Lower lobe of right lung (tissue), 2 donors: ENCODE measurements at regions of chr11 and their contacts with region 1.

Region 1: DNA sequence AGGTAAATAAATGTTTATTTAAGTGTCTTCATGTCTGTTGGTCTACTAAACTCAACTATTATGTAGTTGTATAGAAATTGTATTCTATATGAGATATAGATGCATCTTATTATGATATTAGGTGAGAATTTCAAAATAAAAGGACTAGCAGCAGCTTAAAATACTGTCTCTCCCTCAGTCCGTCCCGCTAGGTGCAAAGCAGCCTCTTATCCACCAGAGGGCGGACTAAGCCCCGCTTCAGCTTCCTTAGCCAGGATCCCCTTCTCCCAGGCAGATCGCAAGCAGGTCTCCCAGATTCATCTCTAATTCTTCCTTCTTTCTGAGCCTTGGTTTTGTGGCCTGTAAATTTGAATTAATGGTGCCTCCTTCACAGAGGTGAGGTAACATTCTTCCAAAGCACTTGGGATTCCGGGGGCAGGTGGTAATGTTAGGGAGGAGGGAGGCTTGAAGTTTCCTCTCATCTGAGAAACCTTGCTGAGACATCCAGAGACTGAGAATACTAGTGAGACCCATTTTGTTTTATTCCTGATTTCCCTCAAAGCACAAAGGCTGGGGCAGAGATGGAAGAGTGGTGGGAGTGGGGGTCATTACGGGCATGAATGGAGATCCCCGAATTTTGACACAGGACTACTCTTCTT is 13.5 kb upstream of the INSC start:
- DNase-seq: peak; percentile 63
- ATAC-seq: peak; percentile 82 to 83
- H3K4me3 ChIP-seq: no peak overlapping the region
- H3K27ac ChIP-seq: no peak overlapping the region
- H3K4me1 ChIP-seq: no peaks in the 10 kb centered on the region
- H3K27me3 ChIP-seq: peaks cover 4% of the 10 kb centered on the region
- CTCF ChIP-seq: peak; percentile 90

Region 2: DNA sequence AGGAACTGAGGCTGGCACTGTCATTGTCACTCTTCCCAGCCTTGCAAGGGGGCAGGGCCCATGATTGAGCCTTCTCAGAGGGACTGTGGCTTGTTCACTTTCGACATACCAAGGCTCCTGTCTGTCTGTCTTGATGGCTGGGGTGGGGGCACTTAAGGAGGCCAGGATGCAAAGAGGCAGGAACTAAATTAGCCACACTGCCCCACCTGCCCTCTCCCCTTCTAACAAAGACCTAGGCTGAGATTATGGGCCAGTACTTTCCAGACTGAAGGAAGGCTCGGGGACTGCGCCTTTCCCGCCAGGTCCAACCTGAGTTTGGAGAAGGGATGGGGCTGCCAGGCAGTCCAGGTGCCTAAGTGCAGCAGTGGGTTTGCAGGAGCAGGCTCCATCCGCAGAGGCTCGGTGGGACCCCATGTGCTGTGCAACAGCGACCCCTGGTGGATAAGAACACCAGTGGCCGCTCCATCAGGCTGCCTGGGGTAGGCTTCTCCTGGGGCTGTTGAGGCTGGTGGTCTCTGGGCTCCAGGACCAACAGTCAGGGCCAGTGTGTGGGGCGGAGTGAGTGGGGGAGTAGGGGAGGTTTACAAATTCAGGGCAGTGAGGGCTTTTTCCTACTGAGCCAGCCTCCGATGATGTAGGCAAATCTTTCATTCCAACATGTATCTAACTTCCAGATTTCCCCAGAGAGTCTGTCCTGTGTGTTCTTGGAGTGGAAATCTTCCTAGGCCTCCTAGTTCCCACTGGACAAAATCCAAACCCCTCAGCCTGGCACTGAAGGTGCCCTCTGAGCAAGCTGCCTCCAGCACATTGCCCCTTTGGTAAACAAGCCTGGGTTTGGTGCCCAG is 107.4 kb after region 1 on chr11:
- intact Hi-C with region 1: loop called (anchors 5 kb)
- DNase-seq: peak; percentile 83
- ATAC-seq: peak; percentile 89
- H3K4me3 ChIP-seq: no peak overlapping the region
- H3K27ac ChIP-seq: no peak overlapping the region
- H3K4me1 ChIP-seq: no peaks in the 10 kb centered on the region
- H3K27me3 ChIP-seq: no peaks in the 10 kb centered on the region
- CTCF ChIP-seq: peak; percentile 92